IMR-90 (cell line): ENCODE measurements at regions of chrX and their contacts with region 1.

Region 1: GRCh38 chrX:124395145-124395880 is 49.0 kb downstream of the SH2D1A start:
- DNase-seq: no peak
- ATAC-seq: no peak
- H3K4me3 ChIP-seq: no peak overlapping the region
- H3K27ac ChIP-seq: no peak overlapping the region
- H3K4me1 ChIP-seq: no peaks in the 10 kb centered on the region
- H3K27me3 ChIP-seq: no peaks in the 10 kb centered on the region
- CTCF ChIP-seq: no peak
- POLR2A ChIP-seq: no peak
- RAD21 ChIP-seq: no peak

Region 2: DNA sequence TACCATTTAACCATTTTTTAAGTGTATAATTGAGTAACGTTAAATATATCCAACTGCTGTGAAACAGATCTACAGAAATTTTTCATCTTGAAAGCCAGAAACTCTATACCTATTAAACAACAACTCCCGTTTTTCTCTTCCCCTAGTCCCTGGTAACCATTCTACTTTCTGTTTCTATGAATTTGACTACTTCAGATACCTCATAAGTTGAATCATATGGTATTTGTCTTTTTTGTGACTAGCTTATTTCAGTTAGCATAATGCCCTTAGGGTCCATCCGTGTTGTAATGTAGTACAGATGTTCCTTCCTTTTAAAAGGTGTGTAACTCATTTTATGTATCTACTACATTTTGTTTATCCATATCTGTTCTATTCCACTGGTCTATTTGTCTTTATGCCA is 385.2 kb before region 1 on chrX:
- CTCF ChIA-PET with region 1: no interaction called
- POLR2A ChIA-PET with region 1: no interaction called
- dilution Hi-C with region 1: no loop called
- in situ Hi-C with region 1: no loop called
- intact Hi-C with region 1: no loop called
- DNase-seq: peak; percentile 7
- ATAC-seq: no peak
- H3K4me3 ChIP-seq: no peak overlapping the region
- H3K27ac ChIP-seq: no peak overlapping the region
- H3K4me1 ChIP-seq: no peaks in the 10 kb centered on the region
- H3K27me3 ChIP-seq: no peaks in the 10 kb centered on the region
- CTCF ChIP-seq: no peak
- POLR2A ChIP-seq: no peak
- RAD21 ChIP-seq: no peak

Region 3: GRCh38 chrX:124406294-124407014 is 11.1 kb after region 1 on chrX:
- CTCF ChIA-PET with region 1: no interaction called
- POLR2A ChIA-PET with region 1: no interaction called
- dilution Hi-C with region 1: no loop called
- in situ Hi-C with region 1: no loop called
- intact Hi-C with region 1: no loop called
- DNase-seq: peak; percentile 46
- ATAC-seq: peak; percentile 72
- H3K4me3 ChIP-seq: no peak overlapping the region
- H3K27ac ChIP-seq: no peak overlapping the region
- H3K4me1 ChIP-seq: no peaks in the 10 kb centered on the region
- H3K27me3 ChIP-seq: no peaks in the 10 kb centered on the region
- CTCF ChIP-seq: peak; percentile 48
- POLR2A ChIP-seq: no peak
- RAD21 ChIP-seq: peak; percentile 70

Region 4: DNA sequence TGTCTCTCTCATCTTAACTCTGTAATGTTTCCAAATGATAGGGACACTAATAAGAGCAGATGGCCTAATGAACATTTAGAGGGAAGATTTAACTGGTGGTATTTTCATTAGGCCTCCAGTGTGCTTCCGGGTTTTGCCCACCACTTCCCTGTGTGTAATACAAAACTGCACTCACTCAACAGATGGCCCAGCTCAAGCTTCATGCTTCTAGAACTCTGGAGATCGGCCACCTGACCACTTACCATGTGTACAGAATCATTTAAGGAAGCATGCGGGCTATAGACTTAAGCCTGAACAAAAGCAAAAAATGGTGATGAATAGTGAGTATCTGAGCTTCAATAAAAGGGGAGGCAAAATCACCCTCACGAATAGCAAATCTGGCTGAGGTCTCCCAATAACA is 40.3 kb after region 1 on chrX:
- CTCF ChIA-PET with region 1: no interaction called
- POLR2A ChIA-PET with region 1: no interaction called
- dilution Hi-C with region 1: no loop called
- in situ Hi-C with region 1: no loop called
- intact Hi-C with region 1: no loop called
- DNase-seq: no peak
- ATAC-seq: no peak
- H3K4me3 ChIP-seq: no peak overlapping the region
- H3K27ac ChIP-seq: no peak overlapping the region
- H3K4me1 ChIP-seq: no peaks in the 10 kb centered on the region
- H3K27me3 ChIP-seq: no peaks in the 10 kb centered on the region
- CTCF ChIP-seq: no peak
- POLR2A ChIP-seq: no peak
- RAD21 ChIP-seq: no peak

Region 5: DNA sequence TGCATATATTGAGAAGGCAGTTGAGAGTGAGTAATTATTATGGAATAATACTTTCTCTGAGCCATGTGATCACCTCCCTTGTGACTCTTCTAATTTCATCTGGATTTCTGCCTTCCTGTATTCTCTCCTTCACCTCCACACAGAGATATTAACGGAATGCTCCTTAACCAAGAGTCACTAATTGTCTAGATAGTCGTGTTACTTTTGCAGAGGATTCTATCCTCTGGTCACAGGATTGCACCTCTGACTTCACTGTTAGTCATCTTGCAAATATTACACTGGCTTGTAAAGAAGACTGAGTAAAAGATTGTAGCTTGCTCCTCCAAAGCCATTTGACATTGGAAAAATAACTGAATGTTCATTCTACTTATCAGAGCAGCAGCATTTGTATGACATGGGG is 111.9 kb after region 1 on chrX:
- CTCF ChIA-PET with region 1: interaction called, 10 read pairs
- POLR2A ChIA-PET with region 1: no interaction called
- dilution Hi-C with region 1: no loop called
- in situ Hi-C with region 1: no loop called
- intact Hi-C with region 1: no loop called
- DNase-seq: no peak
- ATAC-seq: no peak
- H3K4me3 ChIP-seq: no peak overlapping the region
- H3K27ac ChIP-seq: no peak overlapping the region
- H3K4me1 ChIP-seq: no peaks in the 10 kb centered on the region
- H3K27me3 ChIP-seq: no peaks in the 10 kb centered on the region
- CTCF ChIP-seq: no peak
- POLR2A ChIP-seq: no peak
- RAD21 ChIP-seq: no peak